ENCODE measurements at regions of chr5 and their contacts with region 1.

Region 1: DNA sequence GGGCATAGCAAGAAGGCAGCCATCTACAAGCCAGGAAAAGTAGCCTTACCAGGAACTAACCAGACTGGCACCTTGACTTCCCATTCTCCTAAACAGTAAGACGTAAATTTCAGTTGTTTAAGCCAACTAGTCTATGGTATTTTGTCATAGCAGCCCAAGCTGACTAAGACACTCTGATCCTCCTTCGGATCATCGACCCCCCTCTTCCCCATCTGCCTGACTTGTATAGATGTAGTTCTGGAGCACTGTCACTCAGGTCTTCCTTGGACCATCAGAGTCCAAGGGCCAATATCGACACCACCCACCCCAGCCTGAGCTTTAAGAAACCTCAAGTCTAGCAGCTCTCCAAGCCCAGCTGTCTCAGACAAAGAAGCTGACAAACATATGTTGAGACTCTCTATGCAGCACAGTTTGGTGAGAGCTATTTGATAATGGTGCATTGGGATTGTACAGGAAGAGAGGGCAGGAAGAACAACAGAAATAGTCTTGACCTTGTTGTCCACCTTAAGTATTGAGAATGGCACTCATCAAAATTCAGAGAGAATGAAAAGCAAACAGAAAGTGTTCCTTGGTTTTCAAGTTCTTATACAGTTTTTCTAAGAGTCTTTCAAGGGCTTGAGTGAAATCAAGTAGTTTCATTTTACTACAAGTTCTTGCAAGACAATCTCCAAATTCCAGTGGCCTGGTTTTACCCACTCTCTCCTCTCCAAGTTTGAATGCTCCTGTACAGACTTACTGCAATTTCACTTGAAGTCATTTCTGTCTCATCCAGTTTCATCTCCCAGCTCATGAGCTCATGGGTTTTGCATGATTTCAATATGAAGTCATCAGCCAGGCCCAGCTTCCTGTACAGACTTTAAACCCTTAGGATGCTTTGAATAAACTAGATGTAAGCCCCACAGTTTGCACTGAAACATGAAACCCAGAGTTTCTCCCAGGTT is 122.3 kb upstream of the RAI14 start:
- DNase-seq: no peak
- H3K4me3 Mint-ChIP-seq: no peak overlapping the region
- H3K27ac Mint-ChIP-seq: peak overlapping the region; percentile 58
- H3K4me1 Mint-ChIP-seq: peaks cover 20% of the 10 kb centered on the region
- H3K27me3 Mint-ChIP-seq: no peaks in the 10 kb centered on the region

Region 2: DNA sequence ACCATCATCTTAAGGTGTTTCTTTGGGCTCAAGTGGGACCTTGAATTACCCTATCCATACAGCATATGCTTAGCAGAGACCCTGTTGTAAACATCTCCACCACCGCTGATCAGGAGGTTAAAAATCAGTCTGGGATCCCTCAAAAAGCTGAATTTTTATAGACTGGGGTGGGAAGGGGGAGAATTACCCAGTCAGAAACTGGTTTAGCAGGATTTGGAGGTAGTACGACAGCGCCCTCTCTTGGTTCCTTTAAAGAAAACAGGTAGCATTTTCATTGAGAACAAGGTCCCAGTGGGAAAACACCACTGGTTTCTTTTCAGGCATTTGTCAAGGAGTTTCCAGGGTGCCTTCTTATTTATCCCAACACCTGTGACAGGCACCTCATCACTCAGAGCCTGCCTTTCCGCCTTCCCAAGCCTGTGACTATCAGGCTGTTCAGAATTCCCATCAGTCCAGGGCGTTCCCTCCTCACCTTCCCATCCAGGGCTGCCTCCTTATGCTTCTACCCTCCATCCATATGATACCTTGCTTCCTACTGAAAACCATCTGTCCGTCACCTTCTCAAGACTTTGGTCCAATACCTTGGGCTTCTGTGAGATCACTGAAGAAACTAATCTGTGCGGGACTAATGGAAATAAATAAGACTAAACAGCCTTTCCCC is 81.6 kb before region 1 on chr5:
- intact Hi-C with region 1: no loop called
- DNase-seq: no peak
- H3K4me3 Mint-ChIP-seq: no peak overlapping the region
- H3K27ac Mint-ChIP-seq: no peak overlapping the region
- H3K4me1 Mint-ChIP-seq: no peaks in the 10 kb centered on the region
- H3K27me3 Mint-ChIP-seq: peaks cover 6% of the 10 kb centered on the region

Region 3: GRCh38 chr5:34486160-34486848 is 47.5 kb before region 1 on chr5:
- intact Hi-C with region 1: loop called (anchors 1 kb)
- DNase-seq: peak; percentile 45
- H3K4me3 Mint-ChIP-seq: no peak overlapping the region
- H3K27ac Mint-ChIP-seq: no peak overlapping the region
- H3K4me1 Mint-ChIP-seq: peaks cover 6% of the 10 kb centered on the region
- H3K27me3 Mint-ChIP-seq: peaks cover 16% of the 10 kb centered on the region

Region 4: DNA sequence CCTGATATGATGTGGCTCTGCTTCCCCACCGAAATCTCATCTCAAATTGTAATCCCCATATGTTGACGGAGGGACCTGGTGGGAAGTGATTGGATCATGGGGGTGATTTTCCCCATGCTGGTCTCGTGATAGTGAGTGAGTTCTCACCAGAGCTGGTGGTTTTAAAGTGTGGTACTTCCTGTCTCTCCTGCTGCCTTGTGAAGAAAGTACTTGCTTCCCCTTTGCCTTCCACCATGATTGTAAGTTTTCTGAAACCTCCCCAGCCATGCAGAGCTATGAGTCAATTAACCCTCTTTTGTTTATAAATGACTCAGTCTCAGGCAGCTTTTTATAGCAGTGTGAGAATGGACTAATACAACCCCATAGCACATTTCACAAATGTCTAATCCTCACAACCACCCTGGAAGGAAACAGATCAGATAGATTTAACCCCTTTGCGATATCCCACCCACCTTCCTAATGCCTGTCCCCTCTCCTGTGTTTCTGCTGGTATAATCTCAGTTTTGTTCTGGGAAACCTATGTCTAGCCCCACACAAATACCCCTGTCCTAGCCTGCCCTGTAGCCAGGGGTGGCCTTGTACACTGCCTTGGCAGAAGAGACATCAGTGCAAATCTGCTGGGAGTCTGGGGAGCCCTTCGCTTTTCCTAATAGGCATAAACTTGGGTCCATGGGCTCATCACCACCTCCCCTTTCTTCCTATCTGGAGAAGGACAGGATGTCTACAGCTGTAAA is 34.7 kb before region 1 on chr5:
- intact Hi-C with region 1: loop called (anchors 1 kb)
- DNase-seq: peak; percentile 12
- H3K4me3 Mint-ChIP-seq: no peak overlapping the region
- H3K27ac Mint-ChIP-seq: peak overlapping the region; percentile 44
- H3K4me1 Mint-ChIP-seq: peaks cover 16% of the 10 kb centered on the region
- H3K27me3 Mint-ChIP-seq: peaks cover 4% of the 10 kb centered on the region

Region 5: GRCh38 chr5:34587355-34588241 is 53.7 kb after region 1 on chr5:
- intact Hi-C with region 1: loop called (anchors 10 kb)
- DNase-seq: no peak
- H3K4me3 Mint-ChIP-seq: no peak overlapping the region
- H3K27ac Mint-ChIP-seq: peak overlapping the region; percentile 1
- H3K4me1 Mint-ChIP-seq: peaks cover 23% of the 10 kb centered on the region
- H3K27me3 Mint-ChIP-seq: no peaks in the 10 kb centered on the region

Region 6: DNA sequence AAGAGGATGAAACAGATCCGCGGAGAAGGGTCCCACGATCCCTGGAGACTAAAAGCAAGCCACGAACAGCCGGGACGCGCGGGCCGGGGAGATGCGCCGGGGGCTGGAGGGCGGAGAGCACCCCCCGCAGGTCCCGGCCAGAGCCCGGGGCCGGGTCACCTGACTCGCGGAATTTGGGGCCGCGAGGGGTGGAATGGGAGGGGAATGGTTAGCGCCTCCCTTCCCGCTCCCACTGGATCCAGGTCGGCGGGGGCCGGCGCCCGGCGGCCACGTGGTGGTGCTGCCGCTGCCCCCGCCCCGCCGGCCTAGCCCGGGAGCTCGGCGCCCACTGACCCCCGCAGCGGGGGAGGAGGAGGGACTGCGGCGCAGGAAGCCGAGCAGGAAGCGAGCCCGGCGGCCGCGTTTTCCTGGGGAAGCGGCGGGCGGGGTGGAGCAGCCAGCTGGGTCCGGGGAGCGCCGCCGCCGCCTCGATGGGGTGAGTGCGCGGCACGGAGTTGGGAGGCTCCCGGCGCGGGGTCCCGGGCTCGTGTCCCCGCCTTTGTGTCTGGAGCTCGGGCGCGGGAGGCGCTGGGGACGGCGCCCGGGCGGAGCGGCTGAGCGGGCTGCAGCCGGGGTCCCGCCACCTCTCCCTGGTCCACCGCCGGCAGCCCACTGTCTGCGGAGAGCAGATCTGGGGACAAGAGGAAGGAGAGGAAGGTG is 122.3 kb after region 1 on chr5 and contains the start of gene RAI14:
- intact Hi-C with region 1: loop called (anchors 10 kb)
- DNase-seq: no peak
- H3K4me3 Mint-ChIP-seq: peak within 1 kb of the TSS; percentile 82
- H3K27ac Mint-ChIP-seq: peak within 1 kb of the TSS; percentile 15
- H3K4me1 Mint-ChIP-seq: peaks cover 8% of the 10 kb centered on the region
- H3K27me3 Mint-ChIP-seq: peaks cover 47% of the 10 kb centered on the region
- total RNA-seq, gene RAI14: 4.0 and 4.2 TPM in 2 replicates

Region 7: GRCh38 chr5:34686762-34687268 is 153.0 kb after region 1 on chr5:
- intact Hi-C with region 1: loop called (anchors 10 kb)
- DNase-seq: no peak
- H3K4me3 Mint-ChIP-seq: no peak overlapping the region
- H3K27ac Mint-ChIP-seq: no peak overlapping the region
- H3K4me1 Mint-ChIP-seq: no peaks in the 10 kb centered on the region
- H3K27me3 Mint-ChIP-seq: no peaks in the 10 kb centered on the region

Region 8: DNA sequence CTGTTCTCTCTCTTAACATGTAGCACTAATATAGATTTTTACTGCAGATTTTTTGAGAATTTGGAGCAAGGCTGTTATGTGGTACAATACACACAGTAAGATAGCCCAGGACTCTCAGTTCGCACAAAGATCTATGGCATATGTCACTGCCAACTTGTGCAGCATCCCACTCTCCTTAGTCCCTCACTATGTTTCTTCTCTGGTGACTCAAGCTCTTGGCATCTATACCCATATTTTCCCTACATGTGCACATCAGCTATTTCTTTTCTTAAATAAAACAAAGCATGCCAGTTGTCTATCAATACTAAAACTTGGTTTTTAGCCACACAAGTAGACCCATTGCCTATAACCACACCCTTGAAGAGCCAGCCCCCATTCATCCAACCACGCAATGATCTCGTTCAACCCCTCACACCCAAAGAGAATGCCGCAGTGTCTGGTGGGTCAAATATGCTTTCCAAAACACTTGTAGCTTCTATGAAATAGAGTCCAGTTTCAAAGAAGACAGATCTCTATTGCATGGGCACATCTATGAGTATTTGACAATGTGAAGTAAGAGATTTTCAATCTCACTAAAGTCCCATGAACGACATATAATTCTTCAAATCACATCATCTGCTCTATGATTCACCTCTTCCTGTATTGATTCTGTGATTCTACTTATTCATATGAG is 1304.7 kb after region 1 on chr5:
- intact Hi-C with region 1: loop called (anchors 10 kb)
- DNase-seq: no peak
- H3K4me3 Mint-ChIP-seq: no peak overlapping the region
- H3K27ac Mint-ChIP-seq: peak overlapping the region; percentile 85
- H3K4me1 Mint-ChIP-seq: peaks cover 51% of the 10 kb centered on the region
- H3K27me3 Mint-ChIP-seq: no peaks in the 10 kb centered on the region

Region 9: GRCh38 chr5:36507332-36507952 is 1973.6 kb after region 1 on chr5:
- intact Hi-C with region 1: no loop called
- DNase-seq: peak; percentile 52
- H3K4me3 Mint-ChIP-seq: no peak overlapping the region
- H3K27ac Mint-ChIP-seq: no peak overlapping the region
- H3K4me1 Mint-ChIP-seq: no peaks in the 10 kb centered on the region
- H3K27me3 Mint-ChIP-seq: peaks cover 2% of the 10 kb centered on the region

Measured in activated T-helper 2 cell treated with anti-CD3 and anti-CD28 coated beads, Interferon-gamma antibody, Interleukin-2, Interleukin-4, amounts not matched to agents 10 μg/mL and 5 μg/mL and 100 μg/mL, durations not matched to agents 14 hours and 24 hours and 36 hours (primary cell).